ENCODE measurements at regions of chr20 and their contacts with region 1.

Region 1: GRCh38 chr20:41142919-41143318 is 5.6 kb downstream of the PLCG1 start:
- DNase-seq: peak; percentile 78
- H3K4me3 Mint-ChIP-seq: peak overlapping the region; percentile 86
- H3K27ac Mint-ChIP-seq: peak overlapping the region; percentile 90
- H3K4me1 Mint-ChIP-seq: peaks cover 86% of the 10 kb centered on the region
- H3K27me3 Mint-ChIP-seq: no peaks in the 10 kb centered on the region

Region 2: GRCh38 chr20:41064377-41064776 is 78.5 kb before region 1 on chr20:
- CTCF ChIA-PET with region 1: no interaction called
- POLR2A ChIA-PET with region 1: no interaction called
- DNase-seq: no peak
- H3K4me3 Mint-ChIP-seq: no peak overlapping the region
- H3K27ac Mint-ChIP-seq: no peak overlapping the region
- H3K4me1 Mint-ChIP-seq: peaks cover 22% of the 10 kb centered on the region
- H3K27me3 Mint-ChIP-seq: no peaks in the 10 kb centered on the region

Region 3: DNA sequence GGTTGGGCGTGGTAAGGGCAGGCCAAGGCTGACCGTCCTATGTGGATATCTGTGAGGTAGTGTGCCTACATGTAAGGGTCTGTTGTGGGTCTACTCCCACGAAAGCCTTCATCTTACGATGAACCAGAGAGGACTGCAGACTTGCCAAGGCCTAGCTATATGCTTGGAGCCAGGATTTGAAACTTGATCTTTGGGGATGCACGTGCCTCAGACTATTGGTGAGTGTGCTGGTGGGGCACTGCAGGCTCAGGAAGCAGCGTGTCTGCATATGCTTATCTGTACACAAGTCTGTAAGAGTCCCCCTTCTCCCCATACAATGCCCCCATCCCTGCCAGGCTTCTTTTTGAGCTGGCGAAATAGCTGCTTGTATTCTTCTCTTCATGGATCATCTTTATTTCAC is 12.3 kb after region 1 on chr20:
- CTCF ChIA-PET with region 1: interaction called, 48 read pairs
- POLR2A ChIA-PET with region 1: interaction called, 466 read pairs
- DNase-seq: no peak
- H3K4me3 Mint-ChIP-seq: no peak overlapping the region
- H3K27ac Mint-ChIP-seq: peak overlapping the region; percentile 97
- H3K4me1 Mint-ChIP-seq: peaks cover 98% of the 10 kb centered on the region
- H3K27me3 Mint-ChIP-seq: no peaks in the 10 kb centered on the region

Measured in activated CD4-positive, alpha-beta memory T cell treated with anti-CD3 and anti-CD28 coated beads, Interleukin-2, amount 10 ng/mL, durations not matched to agents 7 days and 5 days (primary cell).